ENCODE measurements at regions of chr18 and their contacts with region 1.

Region 1: GRCh38 chr18:44704137-44704789 is 23.6 kb downstream of the SETBP1 start:
- DNase-seq: no peak
- ATAC-seq: no peak

Region 2: GRCh38 chr18:44736664-44737380 is 32.6 kb after region 1 on chr18:
- intact Hi-C with region 1: loop called (anchors 1 kb)
- DNase-seq: no peak
- ATAC-seq: peak; percentile 14

Region 3: GRCh38 chr18:44761822-44762221 is 57.6 kb after region 1 on chr18:
- intact Hi-C with region 1: no loop called
- DNase-seq: no peak
- ATAC-seq: no peak

Region 4: DNA sequence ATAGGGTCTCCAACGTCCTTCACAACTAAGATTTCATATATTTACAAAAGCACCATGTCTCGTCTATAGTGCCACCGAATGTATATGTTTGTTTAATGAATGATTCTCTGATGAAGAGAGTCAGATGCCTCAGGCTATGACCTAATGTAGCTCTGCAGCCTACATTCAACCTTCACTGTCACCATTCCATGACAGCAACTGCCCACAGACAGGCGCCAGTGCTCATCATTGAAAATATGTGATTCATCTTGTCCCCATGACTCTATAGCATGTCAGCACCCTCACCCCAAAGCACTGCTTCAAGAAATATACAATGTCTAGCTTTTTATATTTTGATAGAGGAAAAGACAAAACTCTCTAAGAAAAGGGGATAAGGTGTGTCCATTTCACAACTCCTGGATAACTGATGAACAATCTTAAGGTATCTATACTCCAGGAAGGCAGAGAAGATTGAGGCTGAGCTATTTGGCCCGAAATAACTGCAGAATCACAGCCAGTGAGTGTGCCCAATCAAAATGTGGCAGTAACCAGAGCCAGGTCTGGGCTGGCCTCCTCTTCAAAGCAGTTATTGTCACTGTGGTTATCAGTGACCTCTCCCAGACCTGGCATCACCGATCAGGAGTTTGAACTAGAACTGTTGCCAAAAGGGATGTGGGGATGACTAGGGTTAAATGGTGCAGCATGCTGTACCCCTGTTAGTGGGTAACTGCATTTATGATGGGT is 223.0 kb after region 1 on chr18:
- intact Hi-C with region 1: no loop called
- DNase-seq: no peak
- ATAC-seq: no peak